Activated CD8-positive, alpha-beta T cell treated with anti-CD3 and anti-CD28 coated beads, Interleukin-2, amount 10 ng/mL, durations not matched to agents 7 days and 5 days (primary cell): ENCODE measurements at regions of chr17 and their contacts with region 1.

Region 1: DNA sequence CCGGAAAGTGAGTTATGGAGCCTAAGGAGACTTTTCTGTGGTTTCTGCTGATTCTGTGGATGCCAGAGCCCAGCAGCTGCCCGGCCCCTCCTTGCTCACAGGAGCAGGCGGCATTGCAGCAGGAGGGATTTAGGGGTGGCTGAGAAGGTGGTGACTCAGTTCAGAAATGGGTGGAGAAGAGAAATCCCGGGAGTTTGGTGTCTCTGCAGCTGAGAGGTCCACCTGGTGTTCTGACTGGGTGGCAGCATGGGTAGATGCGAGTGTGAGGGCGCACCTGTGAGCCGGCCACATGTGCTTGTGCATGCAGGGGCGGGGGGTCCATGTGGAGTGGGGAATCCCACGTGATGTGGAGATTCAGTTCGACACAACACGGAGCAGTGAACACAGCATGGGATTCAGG is 16.1 kb upstream of the SPPL2C start:
- DNase-seq: no peak
- ATAC-seq: no peak
- H3K4me3 Mint-ChIP-seq: no peak overlapping the region
- H3K27ac Mint-ChIP-seq: no peak overlapping the region
- H3K4me1 Mint-ChIP-seq: peaks cover 6% of the 10 kb centered on the region
- H3K27me3 Mint-ChIP-seq: peaks cover 3% of the 10 kb centered on the region

Region 2: GRCh38 chr17:45640141-45640850 is 188.3 kb before region 1 on chr17:
- CTCF ChIA-PET with region 1: interaction called, 62 read pairs
- POLR2A ChIA-PET with region 1: interaction called, 5 read pairs
- DNase-seq: peak; percentile 77
- ATAC-seq: peak; percentile 82
- H3K4me3 Mint-ChIP-seq: no peak overlapping the region
- H3K27ac Mint-ChIP-seq: no peak overlapping the region
- H3K4me1 Mint-ChIP-seq: peaks cover 17% of the 10 kb centered on the region
- H3K27me3 Mint-ChIP-seq: peaks cover 3% of the 10 kb centered on the region

Region 3: DNA sequence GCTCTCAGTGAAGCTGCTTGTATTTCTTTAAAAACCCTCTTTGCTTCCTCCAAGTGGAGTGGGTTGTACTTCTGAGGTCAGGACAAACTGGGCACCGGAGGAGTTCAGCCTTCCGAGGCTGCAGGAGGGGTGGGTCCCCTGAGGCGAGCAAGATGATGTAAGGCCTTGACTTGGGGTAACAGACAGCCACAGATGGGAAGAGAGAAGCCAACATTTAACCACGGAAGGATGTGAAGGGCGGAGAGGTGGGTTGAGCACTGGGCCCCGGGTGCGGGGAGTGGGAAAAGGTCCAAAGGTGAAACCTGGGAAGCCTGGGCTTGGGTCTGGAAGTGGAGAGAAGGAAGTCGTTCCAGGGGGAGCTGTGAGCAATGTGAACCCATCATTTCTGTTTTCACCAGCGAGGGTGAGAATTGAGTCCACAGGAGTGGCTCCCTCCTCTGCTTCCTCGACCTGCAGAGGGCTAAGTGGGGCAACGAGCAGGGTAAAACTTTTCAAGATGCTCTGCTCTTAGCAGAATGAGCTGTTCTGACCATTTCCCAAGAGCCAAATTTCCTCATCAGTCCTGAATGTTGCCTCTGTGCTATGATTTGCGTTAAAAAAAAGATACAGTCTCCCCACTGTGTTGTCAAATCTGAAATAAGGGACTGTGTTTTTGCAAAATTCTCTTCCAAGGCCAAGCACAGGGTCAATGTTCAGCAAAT is 182.2 kb before region 1 on chr17:
- CTCF ChIA-PET with region 1: interaction called, 62 read pairs
- POLR2A ChIA-PET with region 1: no interaction called
- DNase-seq: peak; percentile 27
- ATAC-seq: no peak
- H3K4me3 Mint-ChIP-seq: no peak overlapping the region
- H3K27ac Mint-ChIP-seq: no peak overlapping the region
- H3K4me1 Mint-ChIP-seq: peaks cover 15% of the 10 kb centered on the region
- H3K27me3 Mint-ChIP-seq: peaks cover 18% of the 10 kb centered on the region

Region 4: DNA sequence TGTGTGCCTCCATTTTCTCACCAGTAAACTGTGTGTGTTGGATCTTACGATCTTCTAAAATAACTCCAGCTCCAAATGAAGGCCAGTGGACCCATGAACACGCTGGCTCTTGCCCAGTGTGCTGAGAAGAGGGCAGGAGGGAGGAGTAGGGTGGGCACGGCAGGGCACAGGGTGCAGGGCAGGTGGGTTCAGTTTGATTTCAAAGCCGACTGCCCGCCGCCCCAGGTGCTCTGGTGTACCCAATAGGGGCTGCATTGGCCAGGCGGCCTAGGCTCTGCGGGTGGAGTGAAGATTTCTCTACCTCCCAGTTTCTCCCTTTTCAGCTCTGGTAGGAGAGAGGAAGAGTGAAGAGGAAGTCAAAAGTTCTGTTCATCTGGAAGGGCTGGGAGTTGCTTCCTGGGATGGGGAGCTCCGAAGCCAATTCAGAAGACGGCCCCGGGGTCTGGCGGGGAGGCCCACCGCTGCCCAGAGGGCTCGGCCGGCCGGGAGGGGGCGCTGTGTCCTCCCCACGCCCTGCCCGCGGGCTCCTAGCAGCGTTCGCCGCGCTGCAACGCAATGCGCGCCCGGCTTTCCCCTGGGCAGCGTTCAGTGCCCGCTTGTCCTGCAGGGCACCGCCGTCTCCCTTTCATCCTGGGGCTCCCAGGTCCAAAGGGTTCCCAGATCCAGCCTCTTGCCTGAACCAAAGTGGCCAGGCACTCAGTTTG is 45.6 kb before region 1 on chr17:
- CTCF ChIA-PET with region 1: interaction called, 12 read pairs
- POLR2A ChIA-PET with region 1: no interaction called
- DNase-seq: peak; percentile 28
- ATAC-seq: peak; percentile 53
- H3K4me3 Mint-ChIP-seq: peak overlapping the region; percentile 59
- H3K27ac Mint-ChIP-seq: no peak overlapping the region
- H3K4me1 Mint-ChIP-seq: peaks cover 4% of the 10 kb centered on the region
- H3K27me3 Mint-ChIP-seq: peaks cover 70% of the 10 kb centered on the region